KBM-7 (cell line): ENCODE measurements at regions of chr6 and their contacts with region 1.

Region 1: DNA sequence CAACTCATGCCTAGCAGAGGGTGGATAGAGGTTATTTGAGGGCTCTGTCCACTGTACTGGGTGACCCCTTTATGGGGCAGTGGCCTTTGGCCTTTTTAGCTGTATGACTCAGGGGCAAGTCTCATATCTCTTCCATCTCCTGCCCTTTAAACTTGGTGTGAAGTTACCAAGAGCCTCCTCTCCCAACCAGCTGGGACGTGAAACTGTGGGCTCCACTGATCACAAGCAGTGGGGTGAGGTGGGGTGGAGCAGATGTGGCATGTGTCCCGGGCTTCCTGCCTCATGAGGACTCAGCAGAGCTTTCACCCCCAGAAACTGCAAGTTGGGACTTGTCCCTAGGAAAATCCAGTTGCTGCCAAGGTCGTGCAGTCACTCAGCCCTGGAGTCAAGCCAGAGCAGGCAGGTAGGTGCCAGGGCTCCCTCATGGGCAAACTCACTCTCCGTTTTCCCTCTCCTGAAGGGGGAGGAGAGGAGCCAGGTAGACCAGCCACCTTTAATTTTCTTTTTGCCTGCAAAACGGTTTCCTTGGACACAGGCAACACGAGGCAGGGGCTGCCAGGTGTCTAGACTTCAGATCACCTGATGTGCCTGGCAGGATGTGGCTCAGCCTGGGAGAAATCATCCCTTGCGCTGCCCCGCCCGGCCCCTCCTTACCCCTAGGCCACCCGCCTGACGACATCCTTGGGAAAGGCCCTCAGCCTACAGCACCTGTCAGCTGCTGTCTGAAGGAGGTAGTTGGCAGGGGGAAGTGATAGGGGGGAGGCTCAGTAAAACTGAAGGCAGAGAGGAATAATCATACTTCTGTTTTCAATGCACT is 4.0 kb downstream of the CDKN1A start:
- DNase-seq: peak; percentile 82

Region 2: DNA sequence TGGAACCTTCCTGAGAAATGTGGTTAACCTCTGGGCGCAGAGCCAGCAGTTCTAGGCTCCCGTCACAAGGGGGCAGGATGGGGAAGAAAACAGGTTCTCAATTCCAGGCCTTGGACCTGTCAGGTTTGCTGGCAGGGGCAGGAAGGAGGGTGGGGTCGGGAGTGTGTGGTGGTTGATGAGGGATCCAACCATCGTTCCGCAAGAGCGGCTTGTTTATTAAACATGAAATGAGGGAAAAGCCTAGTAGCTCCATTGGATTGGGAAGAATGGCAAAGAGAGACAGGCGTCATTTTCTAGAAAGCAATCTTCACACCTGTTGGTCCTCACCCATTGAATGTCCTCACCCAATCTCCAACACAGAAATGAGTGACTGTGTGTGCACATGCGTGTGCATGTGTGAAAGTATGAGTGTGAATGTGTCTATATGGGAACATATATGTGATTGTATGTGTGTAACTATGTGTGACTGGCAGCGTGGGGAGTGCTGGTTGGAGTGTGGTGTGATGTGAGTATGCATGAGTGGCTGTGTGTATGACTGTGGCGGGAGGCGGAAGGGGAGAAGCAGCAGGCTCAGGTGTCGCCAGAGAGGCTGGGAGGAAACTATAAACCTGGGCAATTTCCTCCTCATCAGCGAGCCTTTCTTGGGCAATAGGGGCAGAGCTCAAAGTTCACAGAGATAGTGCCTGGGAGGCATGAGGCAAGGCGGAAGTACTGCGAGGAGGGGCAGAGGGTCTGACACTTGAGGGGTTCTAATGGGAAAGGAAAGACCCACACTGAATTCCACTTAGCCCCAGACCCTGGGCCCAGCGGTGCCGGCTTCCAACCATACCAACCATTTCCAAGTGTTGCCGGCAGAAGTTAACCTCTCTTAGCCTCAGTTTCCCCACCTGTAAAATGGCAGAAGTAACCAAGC is 58.7 kb before region 1 on chr6:
- in situ Hi-C with region 1: loop called (anchors 10 kb)
- DNase-seq: peak; percentile 93